Right ventricle myocardium superior (tissue), 1 donor: ENCODE measurements at regions of chr3 and their contacts with region 1.

Region 1: DNA sequence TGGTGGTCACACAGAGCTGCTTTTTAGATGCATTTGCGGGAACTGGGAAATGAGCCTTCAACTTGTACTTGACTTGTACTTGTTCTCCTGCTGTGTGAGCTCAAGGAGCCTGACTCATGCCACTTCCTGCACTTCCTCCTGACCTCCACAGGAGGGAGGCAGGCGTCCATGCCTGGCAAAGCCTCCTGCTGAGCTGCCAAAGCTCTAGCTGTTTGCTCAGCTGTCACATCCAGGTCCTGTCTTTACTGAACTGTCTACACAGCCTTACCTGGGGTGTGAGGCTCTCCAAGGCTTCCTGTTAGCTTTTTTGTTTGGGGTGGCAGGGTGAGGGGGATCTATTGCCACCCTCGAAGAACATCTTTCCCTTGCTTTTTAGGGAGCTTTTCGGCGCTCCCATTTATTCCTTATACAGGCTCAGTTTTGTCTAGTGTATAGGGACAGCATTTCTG is 6.4 kb downstream of the THPO start:
- DNase-seq: peak; percentile 80
- ATAC-seq: peak; percentile 92

Region 2: DNA sequence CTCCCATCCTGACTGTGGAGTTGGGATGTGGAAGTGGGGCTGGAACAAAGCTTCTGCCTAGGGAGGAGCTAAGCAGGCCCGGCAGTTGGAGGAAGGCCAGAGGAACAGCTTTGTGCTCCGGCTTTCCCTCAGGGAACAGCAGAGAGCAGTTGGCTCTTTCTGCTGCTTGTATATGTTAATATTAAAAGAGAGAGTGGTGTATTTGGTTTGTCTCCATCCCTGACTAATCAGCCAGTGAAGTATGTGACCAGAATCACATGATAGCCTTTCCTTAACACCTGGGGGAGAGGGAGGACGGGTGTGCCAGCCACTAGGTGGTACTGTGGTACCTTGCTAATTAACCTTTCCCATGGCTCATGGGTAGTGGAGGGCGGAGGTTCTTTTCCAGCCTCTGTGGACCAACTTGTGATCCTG is 226.5 kb before region 1 on chr3:
- intact Hi-C with region 1: no loop called
- DNase-seq: peak; percentile 77
- ATAC-seq: peak; percentile 74

Region 3: DNA sequence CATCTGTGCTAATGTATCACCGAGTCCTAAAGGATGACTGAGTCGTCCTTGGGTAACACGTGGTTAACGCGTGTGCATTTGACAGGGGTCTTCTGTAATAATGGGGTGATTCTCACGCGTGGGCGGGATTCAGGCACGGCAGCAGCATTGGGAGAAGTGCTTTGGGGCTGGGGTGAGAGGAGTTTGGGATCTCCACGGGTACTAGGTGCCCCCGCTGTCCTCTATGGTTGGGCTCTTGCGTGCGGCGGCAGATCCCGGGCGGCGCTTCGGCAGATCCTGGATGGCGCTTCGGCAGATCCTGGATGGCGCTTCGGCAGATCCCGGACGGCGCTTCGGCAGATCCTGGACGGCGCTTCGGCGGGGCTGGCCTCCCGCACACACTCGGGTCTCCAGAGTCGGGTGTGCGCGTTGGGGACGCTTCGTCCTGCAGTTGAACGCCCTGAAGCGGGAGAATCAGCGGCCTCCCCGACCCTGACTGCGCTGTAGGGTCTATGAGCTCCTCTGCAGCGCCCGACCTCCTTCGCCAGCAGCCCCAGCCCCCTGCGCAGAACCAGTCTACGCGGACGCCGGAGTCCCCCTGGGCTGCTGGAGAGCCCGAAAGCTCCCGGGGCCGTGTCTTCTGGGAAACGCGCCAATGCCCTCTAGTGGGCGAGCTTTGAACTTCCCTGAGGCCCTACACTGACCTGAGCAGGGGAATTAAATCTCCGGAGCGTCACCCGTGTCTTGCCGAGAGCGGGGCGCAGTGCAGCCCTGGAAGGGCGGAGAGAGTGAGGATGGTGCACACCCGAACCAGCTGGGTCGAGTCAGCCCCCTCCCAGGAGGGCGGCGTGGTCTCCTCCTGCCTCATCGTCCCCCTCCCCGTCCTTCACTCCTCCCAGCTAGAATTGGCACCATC is 141.9 kb after region 1 on chr3:
- intact Hi-C with region 1: loop called (anchors 5 kb)
- DNase-seq: peak; percentile 90
- ATAC-seq: peak; percentile 100

Region 4: DNA sequence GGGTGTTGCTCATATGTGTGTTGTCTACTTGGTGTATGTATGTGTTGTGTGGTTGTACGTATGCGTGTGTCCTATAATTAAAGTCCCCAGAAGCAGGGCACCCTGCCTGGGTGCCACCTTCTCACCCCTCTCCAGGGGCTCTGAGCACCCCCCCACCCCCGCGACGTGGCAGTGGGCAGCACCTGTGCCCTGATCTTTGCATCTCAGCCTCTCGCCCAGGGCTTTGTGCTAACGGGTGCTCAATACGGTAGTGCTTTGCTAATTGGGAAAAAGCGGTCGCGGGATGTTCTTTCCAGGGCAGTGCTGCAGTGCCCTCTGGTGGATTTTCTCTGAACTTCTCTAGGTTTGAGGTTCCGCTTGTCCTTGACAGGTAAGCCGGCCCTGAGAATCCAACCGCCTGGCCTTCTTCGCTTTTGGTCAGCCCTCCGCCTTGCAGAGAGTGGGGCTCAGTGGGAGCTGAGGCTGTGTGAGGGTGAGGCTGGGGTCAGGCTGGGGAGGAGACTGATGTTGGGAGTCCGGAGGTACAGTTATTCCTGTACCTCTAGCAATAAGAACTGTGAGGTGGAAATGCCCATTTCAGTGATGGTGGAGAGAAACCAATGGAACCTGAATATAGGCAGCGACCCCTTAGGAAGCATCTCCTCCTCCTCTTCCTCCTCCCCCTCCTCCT is 172.4 kb after region 1 on chr3:
- intact Hi-C with region 1: loop called (anchors 2 kb)
- DNase-seq: no peak
- ATAC-seq: peak; percentile 84

Region 5: DNA sequence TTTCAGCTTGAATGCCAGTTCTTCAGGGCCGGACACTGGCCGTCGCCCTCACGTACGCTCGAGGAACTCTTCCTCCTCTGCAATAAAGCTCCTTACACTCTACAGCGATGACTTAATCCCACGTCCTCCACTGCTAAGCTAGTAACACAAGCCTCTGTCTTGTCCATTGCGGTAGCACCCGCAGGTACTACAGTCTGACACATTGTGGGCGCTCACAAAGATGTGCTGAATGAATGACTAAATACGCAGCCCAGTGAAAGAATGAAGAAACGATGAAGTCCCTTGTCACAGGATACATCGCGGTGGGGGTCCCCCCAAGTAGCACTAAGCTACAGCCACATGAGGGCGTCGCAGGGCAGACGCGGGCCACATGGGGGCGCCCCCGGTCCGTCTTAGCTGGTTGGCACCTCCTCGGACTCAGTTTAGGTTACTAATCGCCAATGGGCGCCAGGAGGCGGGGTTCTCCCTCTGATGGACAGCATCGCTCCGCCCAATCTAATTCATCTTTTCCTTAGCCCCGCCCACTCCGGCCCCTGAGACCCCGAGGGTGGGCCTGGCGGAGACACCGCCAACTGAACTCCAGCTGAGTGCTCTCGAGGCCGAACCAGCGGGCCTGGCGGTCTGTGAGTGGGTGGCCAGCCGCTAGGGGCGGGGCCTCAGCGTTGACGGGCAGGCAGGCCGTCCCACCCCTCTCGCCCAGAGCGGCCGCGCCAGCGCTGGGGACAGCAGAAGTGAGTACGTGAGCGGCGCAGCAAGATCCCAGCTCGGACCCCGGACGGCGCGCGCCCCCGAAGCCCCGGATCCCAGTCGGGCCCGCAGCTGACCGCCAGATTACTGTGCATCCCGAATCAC is 189.7 kb after region 1 on chr3 and contains the start of gene EPHB3:
- intact Hi-C with region 1: no loop called
- DNase-seq: peak; percentile 100
- ATAC-seq: peak; percentile 97
- total RNA-seq, gene EPHB3: 2.2 TPM